Pancreas (tissue), 10 donors: ENCODE measurements at regions of chr16 and their contacts with region 1.

Region 1: DNA sequence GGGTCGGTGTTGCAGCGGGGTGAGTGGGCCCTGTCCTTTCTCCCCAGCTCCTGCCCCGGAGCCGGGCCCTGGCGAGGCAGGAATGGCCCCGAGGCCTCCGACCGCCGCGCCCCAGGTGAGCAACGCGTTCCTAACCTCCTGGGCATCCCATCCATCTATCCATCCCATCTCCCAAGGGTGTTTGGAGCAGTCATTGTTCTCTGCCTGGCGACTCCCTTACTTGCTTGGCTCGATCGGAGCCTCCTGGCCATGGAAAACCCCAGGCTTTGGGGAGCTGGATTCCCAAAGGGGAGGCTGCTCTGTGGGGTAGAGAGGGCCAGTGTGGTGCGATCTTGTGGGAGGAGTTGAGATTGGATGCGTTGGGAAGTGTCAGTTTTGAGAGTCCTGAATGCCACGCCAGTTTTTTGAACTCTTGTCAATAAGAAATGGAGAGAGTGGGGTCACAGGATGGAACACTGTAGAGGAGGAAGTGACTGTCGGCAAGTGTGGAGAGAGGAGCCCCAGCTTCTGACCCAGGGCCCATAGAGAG is 684 bp downstream of the ZFP90 start:
- DNase-seq: peak in 1 of 6 donors; percentile 35
- ATAC-seq: peak; percentile 38 to 57 (median 53)
- H3K4me3 ChIP-seq: peak overlapping the region; percentile 90 to 95 (median 91)
- H3K27ac ChIP-seq: no peak overlapping the region
- H3K4me1 ChIP-seq: no peaks in the 10 kb centered on the region
- H3K27me3 ChIP-seq: no peaks in the 10 kb centered on the region
- CTCF ChIP-seq: no peak

Region 2: GRCh38 chr16:68696514-68696913 is 156.7 kb after region 1 on chr16:
- intact Hi-C with region 1: loop called in 1 of 3 experiments (anchors 10 kb)
- DNase-seq: no peak
- ATAC-seq: no peak
- H3K4me3 ChIP-seq: no peak overlapping the region
- H3K27ac ChIP-seq: no peak overlapping the region
- H3K4me1 ChIP-seq: no peaks in the 10 kb centered on the region
- H3K27me3 ChIP-seq: no peaks in the 10 kb centered on the region
- CTCF ChIP-seq: no peak

Region 3: DNA sequence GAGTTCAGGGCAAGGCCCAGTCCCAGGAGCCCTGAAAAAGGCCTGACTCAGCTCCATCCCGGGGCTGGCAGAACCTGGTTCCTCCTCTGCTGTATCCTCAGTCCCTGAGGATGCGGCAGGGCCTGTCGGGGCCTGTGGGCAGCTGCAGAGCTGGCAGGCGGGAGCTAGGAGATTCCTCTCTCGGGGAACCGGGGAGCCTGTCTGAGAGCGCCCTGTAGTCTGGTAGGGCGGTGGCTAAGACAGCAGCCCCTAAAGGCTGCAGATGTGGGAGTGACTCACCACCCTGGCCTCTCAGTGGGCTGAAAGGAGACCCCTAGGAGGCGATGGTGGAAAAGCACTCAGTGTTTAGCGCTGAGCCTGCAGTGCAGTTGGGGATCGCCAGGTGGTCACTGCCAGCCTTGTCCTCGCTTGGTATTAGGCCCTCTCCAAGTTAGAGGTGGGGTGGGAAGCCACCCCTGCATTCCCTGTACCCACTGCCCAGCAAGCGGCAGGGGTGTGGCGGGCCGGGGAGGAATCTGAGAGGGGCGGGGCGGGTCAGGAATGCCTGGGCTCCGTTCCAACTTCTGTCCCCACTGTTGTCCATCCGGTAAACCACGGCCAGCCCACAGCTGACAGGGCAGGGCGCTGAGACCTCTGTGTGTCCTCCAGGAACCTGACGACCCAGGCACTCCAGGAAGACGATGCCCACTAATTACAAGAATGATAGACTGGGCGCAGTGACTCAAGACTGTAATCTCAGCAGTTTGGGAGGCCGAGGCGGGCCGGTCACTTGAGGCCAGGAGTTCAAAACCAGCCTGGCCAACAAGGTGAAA is 167.8 kb after region 1 on chr16:
- intact Hi-C with region 1: no loop called
- DNase-seq: peak; percentile 31 to 85 (median 65)
- ATAC-seq: peak; percentile 20 to 55 (median 28)
- H3K4me3 ChIP-seq: no peak overlapping the region
- H3K27ac ChIP-seq: peak overlapping the region in 3 of 4 donors; percentile 36 to 62 (median 48)
- H3K4me1 ChIP-seq: no peaks in the 10 kb centered on the region
- H3K27me3 ChIP-seq: no peaks in the 10 kb centered on the region
- CTCF ChIP-seq: no peak